Activated CD4-positive, alpha-beta T cell treated with anti-CD3 and anti-CD28 coated beads for 36 hours (primary cell): ENCODE measurements at regions of chr6 and their contacts with region 1.

Region 1: DNA sequence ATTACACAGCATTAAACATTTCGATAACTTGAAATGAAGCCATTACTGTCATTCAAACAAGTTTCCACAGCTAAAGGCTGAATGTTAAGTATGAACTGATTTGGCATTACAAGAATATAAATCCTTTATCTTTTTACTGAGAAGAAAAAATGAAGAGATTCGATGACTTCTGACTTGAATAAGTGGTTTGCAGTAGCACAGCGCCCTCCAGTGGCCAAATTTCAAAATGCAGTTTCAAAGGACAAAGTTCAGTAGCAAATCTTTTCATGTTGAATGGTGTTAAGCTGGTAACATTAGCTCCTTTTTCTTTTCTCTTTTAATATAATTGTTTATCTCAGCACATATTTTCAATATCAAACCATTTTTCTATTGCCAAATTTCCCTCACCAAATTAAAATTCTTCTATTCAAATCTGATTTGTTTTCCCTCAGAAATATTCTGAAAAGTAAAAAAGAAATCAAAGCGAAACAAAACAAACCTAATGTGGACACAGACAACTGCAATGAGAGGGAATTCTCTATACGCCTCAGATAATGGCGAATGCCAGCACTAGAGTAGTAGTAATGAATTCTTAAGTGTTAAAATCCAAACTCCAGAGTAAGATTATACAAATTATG is 145.7 kb downstream of the BTBD9 start:
- DNase-seq: peak; percentile 89
- ATAC-seq: no peak
- H3K4me3 Mint-ChIP-seq: no peak overlapping the region
- H3K27ac Mint-ChIP-seq: no peak overlapping the region
- H3K4me1 Mint-ChIP-seq: peaks cover 7% of the 10 kb centered on the region
- H3K27me3 Mint-ChIP-seq: no peaks in the 10 kb centered on the region

Region 2: DNA sequence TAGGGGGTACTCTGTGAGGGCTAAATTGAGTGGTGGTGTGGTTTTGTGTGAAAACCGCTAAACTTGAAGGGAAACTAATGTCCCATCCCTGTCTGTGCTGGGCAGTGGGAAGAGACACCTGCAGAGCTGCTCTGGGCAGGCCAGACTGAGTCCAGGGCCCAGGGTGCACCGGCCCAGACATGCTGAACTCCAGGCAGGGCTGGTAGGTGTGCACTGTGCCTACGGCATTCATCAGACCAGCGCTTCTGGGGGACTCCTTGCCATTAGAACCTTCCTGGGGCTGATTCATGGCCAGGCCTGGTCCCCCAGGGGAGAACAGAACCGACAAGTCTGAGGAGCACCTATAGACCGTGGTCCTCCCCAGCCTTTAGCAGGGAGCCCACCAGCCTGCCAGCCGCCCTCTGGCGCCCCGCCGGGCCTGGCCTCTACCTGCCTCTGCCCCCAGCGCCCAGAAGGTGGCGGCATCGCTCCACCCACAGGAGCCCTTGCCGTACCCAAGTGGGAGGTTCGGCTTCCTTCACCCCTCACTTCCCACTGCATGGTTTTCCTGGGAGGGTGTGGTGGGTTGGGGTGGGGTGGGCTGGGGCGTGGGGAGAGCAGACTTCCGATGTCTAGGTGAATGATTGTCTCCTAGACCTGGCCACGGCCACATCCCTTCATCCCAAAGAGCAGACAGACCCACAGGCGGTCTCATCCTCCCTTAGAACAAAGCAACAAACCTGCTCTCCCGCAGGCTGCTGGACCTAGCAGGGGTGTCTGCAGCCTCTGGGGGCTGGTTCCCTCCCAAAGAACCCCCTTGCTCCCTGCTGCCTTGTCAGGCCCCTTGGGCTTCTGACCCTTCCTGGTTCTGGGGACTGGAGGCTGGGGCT is 1009.9 kb before region 1 on chr6:
- CTCF ChIA-PET with region 1: no interaction called
- POLR2A ChIA-PET with region 1: no interaction called
- intact Hi-C with region 1: loop called in 1 of 2 experiments (anchors 10 kb)
- DNase-seq: peak; percentile 86
- ATAC-seq: peak; percentile 61
- H3K4me3 Mint-ChIP-seq: no peak overlapping the region
- H3K27ac Mint-ChIP-seq: no peak overlapping the region
- H3K4me1 Mint-ChIP-seq: peaks cover 15% of the 10 kb centered on the region
- H3K27me3 Mint-ChIP-seq: no peaks in the 10 kb centered on the region

Region 3: DNA sequence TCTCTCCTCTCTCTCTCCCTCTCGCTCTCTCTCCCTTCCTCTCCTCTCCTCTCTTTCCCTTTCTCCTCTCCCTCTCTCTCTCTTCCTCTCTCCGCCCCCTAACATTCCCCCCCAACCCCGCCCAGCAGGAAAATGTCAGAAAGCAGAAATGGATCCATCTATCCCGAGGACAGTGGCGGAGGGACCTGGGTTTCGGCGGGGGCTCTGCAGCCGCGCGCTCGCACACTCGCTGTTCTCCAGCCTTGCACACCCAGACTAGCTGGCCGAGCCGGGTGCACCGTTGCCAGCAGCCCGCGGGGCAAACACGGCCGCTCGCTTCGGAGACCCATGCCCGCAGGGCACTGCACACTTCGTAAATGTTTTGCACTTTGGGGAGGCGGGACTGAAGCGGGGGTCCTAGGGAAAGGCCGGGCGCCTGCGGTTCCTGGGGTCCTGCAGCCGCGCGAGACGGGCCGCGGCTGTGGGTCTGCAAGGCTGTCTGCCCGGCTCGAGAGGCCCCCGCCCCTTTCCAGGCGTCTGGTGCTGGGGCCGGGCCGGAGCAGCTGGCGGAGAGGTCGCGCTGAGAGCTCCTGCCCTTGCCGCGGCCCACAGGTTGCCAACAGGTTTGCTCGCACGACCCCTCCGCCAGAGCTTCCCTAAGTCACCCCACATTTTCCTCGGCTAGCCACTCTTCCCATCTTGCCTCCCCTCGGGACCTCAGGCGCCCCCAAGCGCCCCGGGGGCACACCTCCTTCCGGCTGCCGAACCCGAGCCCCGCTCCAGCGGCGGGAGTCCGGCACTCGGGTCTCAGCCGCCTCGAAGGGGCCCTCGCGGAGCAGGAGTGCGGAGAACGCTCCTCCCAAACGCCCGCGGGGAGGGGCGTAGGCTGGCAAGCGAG is 795.5 kb before region 1 on chr6:
- CTCF ChIA-PET with region 1: no interaction called
- POLR2A ChIA-PET with region 1: no interaction called
- intact Hi-C with region 1: loop called in 1 of 2 experiments (anchors 1 kb)
- DNase-seq: peak; percentile 61
- ATAC-seq: peak; percentile 22
- H3K4me3 Mint-ChIP-seq: peak overlapping the region; percentile 77
- H3K27ac Mint-ChIP-seq: no peak overlapping the region
- H3K4me1 Mint-ChIP-seq: peaks cover 21% of the 10 kb centered on the region
- H3K27me3 Mint-ChIP-seq: peaks cover 47% of the 10 kb centered on the region

Region 4: DNA sequence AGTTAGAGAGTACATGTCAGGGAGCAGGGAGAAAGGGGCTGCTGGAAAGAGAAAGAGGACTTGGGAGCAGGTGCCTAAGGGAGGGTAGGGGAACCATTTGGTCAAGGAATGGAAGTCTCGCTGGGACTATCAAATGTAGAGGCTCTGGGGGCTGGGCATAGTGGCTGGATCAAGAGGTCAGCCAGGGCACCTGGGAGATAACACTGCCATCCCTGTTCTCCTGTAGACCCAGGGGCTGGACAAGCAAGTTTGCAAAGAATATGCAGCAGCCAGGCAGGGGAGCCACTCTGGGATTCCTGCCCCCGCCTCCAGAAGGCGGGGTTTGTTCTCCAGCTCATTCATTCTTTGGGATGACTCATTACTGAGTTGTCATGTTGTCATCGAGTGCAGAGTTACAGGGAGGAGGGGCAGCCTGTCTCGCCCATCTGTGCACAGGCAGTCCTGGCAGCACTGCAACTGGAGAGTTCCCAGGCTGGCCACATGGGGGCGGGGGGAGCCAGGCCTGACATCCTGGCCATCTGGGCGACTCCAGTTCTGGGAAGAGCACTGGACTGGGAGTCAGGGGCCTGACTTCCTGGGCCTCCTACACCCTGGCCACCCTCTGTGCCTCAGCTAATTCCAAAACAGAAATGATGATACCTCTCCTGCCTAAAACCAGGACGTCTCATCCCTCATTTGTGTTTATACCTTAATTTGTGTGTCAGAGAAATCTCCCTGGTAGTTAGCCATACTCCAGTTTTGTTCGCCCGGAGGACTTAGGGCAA is 702.7 kb before region 1 on chr6:
- CTCF ChIA-PET with region 1: interaction called, 3 read pairs
- POLR2A ChIA-PET with region 1: no interaction called
- intact Hi-C with region 1: loop called (anchors 1 to 5 kb)
- DNase-seq: peak; percentile 94
- ATAC-seq: peak; percentile 100
- H3K4me3 Mint-ChIP-seq: no peak overlapping the region
- H3K27ac Mint-ChIP-seq: no peak overlapping the region
- H3K4me1 Mint-ChIP-seq: peaks cover 10% of the 10 kb centered on the region
- H3K27me3 Mint-ChIP-seq: no peaks in the 10 kb centered on the region

Region 5: DNA sequence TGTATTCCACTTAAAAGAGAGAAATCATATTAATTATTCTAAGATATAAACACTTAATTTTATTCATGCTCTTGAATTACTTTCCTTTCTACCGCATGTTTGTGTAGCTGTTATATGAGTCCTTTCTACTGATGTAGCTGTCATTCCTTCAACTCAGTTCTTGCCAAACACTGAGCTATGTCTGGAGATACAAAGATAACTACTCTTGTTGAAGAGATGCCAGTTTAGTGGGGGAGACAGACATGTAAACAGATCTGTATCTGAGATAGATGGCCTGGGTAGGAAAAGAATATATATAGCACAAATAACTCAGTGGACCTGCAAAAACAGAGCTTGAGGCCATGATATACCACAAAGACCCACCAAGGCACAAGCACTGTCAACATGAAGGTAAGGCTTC is 11.6 kb before region 1 on chr6:
- CTCF ChIA-PET with region 1: interaction called, 13 read pairs
- POLR2A ChIA-PET with region 1: no interaction called
- intact Hi-C with region 1: no loop called
- DNase-seq: no peak
- ATAC-seq: no peak
- H3K4me3 Mint-ChIP-seq: no peak overlapping the region
- H3K27ac Mint-ChIP-seq: no peak overlapping the region
- H3K4me1 Mint-ChIP-seq: no peaks in the 10 kb centered on the region
- H3K27me3 Mint-ChIP-seq: no peaks in the 10 kb centered on the region

Region 6: DNA sequence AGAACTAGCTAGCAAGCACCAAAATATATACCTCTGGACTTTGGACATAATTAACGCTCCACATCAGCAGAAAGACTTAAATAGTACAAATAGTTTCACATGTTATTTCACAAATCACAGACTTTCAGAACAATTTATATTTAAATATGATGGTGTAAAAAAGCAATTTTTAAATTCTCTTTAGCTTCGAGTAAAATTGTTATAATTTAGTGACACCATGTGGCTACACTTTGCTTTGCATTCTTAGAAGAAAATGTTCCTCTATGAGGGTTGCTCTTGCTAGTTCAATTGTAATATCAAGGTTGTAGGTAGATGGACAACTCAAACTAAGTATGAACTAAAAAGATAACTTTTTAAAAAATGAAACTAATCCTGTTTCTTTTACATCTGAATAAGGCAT is 76.7 kb after region 1 on chr6:
- CTCF ChIA-PET with region 1: interaction called, 7 read pairs
- POLR2A ChIA-PET with region 1: no interaction called
- intact Hi-C with region 1: loop called in 1 of 2 experiments (anchors 2 kb)
- DNase-seq: no peak
- ATAC-seq: no peak
- H3K4me3 Mint-ChIP-seq: no peak overlapping the region
- H3K27ac Mint-ChIP-seq: no peak overlapping the region
- H3K4me1 Mint-ChIP-seq: peaks cover 23% of the 10 kb centered on the region
- H3K27me3 Mint-ChIP-seq: no peaks in the 10 kb centered on the region